Cardiac septum (tissue), 1 donor: ENCODE measurements at regions of chr14 and their contacts with region 1.

Region 1: GRCh38 chr14:69043596-69044260 is 64.6 kb upstream of the ACTN1 start:
- DNase-seq: no peak

Region 2: GRCh38 chr14:68939893-68940613 is 103.7 kb before region 1 on chr14:
- intact Hi-C with region 1: loop called (anchors 2 kb)
- DNase-seq: peak; percentile 88